Right ventricle myocardium inferior (tissue), 1 donor: ENCODE measurements at regions of chr19 and their contacts with region 1.

Region 1: GRCh38 chr19:18281082-18282020 is at the start of gene JUND:
- DNase-seq: peak; percentile 100
- ATAC-seq: peak; percentile 83
- total RNA-seq, gene JUND: 113 TPM

Region 2: GRCh38 chr19:17766543-17767131 is 514.7 kb before region 1 on chr19:
- intact Hi-C with region 1: no loop called
- DNase-seq: peak; percentile 88
- ATAC-seq: peak; percentile 68

Region 3: DNA sequence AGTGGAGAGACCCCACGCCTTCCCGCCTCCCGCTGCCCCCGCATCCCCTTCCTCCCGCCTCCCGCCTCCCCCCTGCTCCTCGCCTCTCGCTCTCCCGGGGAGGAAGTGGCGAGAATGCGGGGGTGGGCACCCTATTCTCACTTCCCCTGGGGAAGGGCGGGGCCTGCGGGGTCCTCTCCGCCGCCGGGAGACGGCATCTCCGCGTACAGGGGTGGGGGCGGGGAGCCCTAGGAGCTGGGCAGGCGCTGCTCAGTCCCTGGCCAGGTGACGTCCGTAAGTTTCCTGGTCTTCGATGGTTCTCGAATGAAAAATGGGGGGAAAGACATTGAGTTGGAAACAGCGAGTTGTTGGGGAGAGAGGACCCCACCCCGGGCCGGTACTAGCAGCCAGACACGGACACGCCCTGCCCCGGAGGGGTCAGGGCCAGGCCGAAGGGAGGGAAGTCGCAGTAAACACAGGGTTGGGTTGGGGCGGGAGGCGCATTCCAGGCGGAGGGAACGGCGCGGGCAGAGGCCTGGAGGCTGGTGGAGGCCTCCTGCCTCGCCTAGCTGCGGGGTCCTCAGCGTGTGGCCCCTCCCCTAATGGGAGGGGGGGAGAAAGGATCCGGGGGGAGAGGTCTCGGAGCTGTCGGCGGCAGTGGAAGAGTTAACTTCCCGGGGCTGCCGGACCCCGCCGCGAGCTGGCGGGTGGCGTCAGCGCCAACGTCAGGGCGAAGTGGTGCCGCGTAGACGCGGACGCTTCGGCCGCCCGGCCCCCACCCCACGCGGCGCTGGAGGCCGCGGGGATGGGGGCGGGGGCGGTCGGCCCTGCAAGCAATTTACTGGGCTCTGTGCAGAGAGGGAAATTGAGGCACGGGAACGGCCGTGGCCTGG is 10.5 kb after region 1 on chr19:
- intact Hi-C with region 1: loop called (anchors 1 kb)
- DNase-seq: peak; percentile 94
- ATAC-seq: peak; percentile 81

Region 4: GRCh38 chr19:18304458-18305310 is 23.3 kb after region 1 on chr19:
- intact Hi-C with region 1: loop called (anchors 1 kb)
- DNase-seq: peak; percentile 92
- ATAC-seq: peak; percentile 88

Region 5: DNA sequence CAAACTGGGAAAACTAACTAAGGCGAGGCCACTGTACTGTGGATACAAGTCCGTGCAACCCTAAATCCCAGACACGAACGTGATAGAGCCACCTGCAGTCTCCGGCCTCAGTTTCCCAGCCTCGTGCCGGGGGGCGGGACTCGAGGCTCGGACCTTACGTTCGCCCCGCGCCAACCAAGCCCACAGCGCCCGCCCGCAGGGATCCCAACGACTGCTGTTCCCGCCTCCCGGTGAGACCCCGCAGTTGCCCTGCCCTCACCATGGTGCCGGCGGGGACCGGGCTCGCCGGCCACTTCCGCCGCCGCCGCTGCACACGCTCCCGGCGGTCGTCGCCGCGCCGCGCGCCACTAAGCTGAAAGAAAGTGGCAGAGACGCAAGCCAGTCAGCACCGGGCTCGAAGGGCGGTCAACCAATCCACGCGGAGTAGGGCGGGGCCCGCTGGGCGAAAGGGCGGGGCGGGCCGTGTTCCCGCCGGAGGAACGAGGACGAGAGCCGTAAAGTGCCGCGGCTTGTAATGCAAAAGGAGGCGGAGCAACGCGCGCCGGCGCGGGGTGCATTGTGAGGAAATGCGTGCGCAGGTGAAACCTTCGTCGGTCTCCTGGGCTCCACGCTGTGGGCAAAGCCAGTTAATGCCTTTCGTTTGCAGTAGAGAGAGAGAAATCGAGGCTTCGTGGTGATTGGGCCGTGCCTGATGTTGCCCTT is 41.6 kb after region 1 on chr19 and contains the start of gene LSM4:
- intact Hi-C with region 1: loop called (anchors 1 kb)
- DNase-seq: peak; percentile 99
- ATAC-seq: peak; percentile 98
- total RNA-seq, gene LSM4: 106 TPM

Region 6: DNA sequence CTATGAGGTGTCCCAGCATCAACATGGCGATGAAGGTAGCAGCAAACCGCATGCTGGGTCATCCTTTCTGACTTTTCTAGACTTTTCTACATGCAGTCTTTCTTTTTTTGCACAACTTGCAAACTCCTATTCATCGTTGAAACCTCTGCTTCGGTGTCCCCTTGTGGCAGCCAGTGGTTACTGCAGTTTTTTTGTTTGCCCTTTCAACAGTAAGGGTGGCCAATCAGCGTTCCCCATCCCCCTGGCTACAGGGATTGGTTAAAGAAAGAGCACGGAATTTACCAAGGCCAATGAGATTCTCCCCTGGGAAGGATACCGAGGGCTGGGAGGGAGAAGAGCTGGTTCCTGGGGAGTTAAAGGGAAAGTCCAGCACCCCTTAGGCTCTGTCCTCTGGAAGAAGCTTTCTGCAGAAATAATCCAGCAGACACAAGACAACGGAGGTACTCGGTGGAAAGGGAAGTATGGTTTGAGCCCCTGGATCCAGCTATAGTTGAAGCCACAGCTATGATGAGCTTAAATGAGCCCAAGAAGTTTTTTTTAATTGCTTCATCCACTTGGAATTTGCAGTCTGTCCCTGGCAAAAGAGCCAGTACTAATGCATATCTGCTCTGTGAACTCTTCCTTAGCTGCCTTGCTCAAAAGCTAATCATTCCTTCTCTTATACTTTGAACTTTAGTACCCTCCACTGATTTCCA is 47.1 kb after region 1 on chr19:
- intact Hi-C with region 1: loop called (anchors 1 kb)
- DNase-seq: peak; percentile 88
- ATAC-seq: peak; percentile 98

Region 7: GRCh38 chr19:18419195-18419698 is 137.9 kb after region 1 on chr19 and contains the start of gene SSBP4:
- intact Hi-C with region 1: loop called (anchors 5 kb)
- DNase-seq: peak; percentile 88
- ATAC-seq: peak; percentile 15
- total RNA-seq, gene SSBP4: 36.2 TPM